ENCODE measurements at regions of chr6 and their contacts with region 1.

Region 1: DNA sequence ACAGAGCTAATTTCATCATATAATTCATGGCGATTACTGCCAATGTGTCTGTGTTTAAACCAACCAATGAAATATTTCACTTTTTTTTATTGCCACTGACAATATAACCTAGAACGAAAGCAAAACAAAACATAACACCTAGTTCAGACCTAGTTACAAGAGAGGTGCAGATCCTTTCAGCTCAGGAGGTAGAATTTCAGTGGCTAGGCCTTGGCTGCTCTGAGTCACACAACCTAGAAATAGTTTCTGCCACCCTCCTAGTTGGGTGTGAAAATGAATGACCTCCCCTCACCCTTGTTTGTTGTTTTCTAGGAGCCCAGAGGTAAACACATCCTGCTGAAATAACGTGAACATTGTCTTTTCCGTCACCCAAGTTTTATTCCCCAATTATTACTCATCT is 356.3 kb downstream of the HTR1B start:
- DNase-seq: no peak
- ATAC-seq: peak; percentile 99
- H3K4me3 ChIP-seq: no peak overlapping the region
- H3K27ac ChIP-seq: no peak overlapping the region
- H3K4me1 ChIP-seq: no peaks in the 10 kb centered on the region
- H3K27me3 ChIP-seq: no peaks in the 10 kb centered on the region
- CTCF ChIP-seq: no peak
- EP300 ChIP-seq: no peak
- POLR2A ChIP-seq: no peak
- RAD21 ChIP-seq: no peak

Region 2: GRCh38 chr6:76972474-76972873 is 134.5 kb before region 1 on chr6:
- CTCF ChIA-PET with region 1: no interaction called
- POLR2A ChIA-PET with region 1: no interaction called
- RAD21 ChIA-PET with region 1: no interaction called
- SMC1A ChIA-PET with region 1: no interaction called
- in situ Hi-C with region 1: no loop called
- intact Hi-C with region 1: no loop called
- DNase-seq: no peak
- ATAC-seq: no peak
- H3K4me3 ChIP-seq: no peak overlapping the region
- H3K27ac ChIP-seq: no peak overlapping the region
- H3K4me1 ChIP-seq: no peaks in the 10 kb centered on the region
- H3K27me3 ChIP-seq: no peaks in the 10 kb centered on the region
- CTCF ChIP-seq: no peak
- EP300 ChIP-seq: no peak
- POLR2A ChIP-seq: no peak
- RAD21 ChIP-seq: no peak

Region 3: GRCh38 chr6:77063494-77063893 is 43.5 kb before region 1 on chr6:
- CTCF ChIA-PET with region 1: no interaction called
- POLR2A ChIA-PET with region 1: no interaction called
- RAD21 ChIA-PET with region 1: no interaction called
- SMC1A ChIA-PET with region 1: no interaction called
- in situ Hi-C with region 1: no loop called
- intact Hi-C with region 1: no loop called
- DNase-seq: no peak
- ATAC-seq: 0 out of 3 replicates have a peak, but pooled peaks have one; percentile 14
- H3K4me3 ChIP-seq: no peak overlapping the region
- H3K27ac ChIP-seq: no peak overlapping the region
- H3K4me1 ChIP-seq: no peaks in the 10 kb centered on the region
- H3K27me3 ChIP-seq: no peaks in the 10 kb centered on the region
- CTCF ChIP-seq: no peak
- EP300 ChIP-seq: no peak
- POLR2A ChIP-seq: no peak
- RAD21 ChIP-seq: no peak

Region 4: GRCh38 chr6:77092971-77093370 is 14.0 kb before region 1 on chr6:
- CTCF ChIA-PET with region 1: interaction called, 3 read pairs
- POLR2A ChIA-PET with region 1: no interaction called
- RAD21 ChIA-PET with region 1: interaction called, 4 read pairs
- SMC1A ChIA-PET with region 1: interaction called, 25 read pairs
- in situ Hi-C with region 1: no loop called
- intact Hi-C with region 1: no loop called
- DNase-seq: no peak
- ATAC-seq: no peak
- H3K4me3 ChIP-seq: no peak overlapping the region
- H3K27ac ChIP-seq: no peak overlapping the region
- H3K4me1 ChIP-seq: no peaks in the 10 kb centered on the region
- H3K27me3 ChIP-seq: no peaks in the 10 kb centered on the region
- CTCF ChIP-seq: no peak
- EP300 ChIP-seq: no peak
- POLR2A ChIP-seq: no peak
- RAD21 ChIP-seq: no peak

Region 5: GRCh38 chr6:77136086-77136485 is 29.1 kb after region 1 on chr6:
- CTCF ChIA-PET with region 1: no interaction called
- POLR2A ChIA-PET with region 1: no interaction called
- RAD21 ChIA-PET with region 1: no interaction called
- SMC1A ChIA-PET with region 1: no interaction called
- in situ Hi-C with region 1: no loop called
- intact Hi-C with region 1: no loop called
- DNase-seq: no peak
- ATAC-seq: peak; percentile 17; the same call in 1 of the 3 replicates
- H3K4me3 ChIP-seq: no peak overlapping the region
- H3K27ac ChIP-seq: no peak overlapping the region
- H3K4me1 ChIP-seq: no peaks in the 10 kb centered on the region
- H3K27me3 ChIP-seq: no peaks in the 10 kb centered on the region
- CTCF ChIP-seq: no peak
- EP300 ChIP-seq: no peak
- POLR2A ChIP-seq: no peak
- RAD21 ChIP-seq: no peak

Region 6: DNA sequence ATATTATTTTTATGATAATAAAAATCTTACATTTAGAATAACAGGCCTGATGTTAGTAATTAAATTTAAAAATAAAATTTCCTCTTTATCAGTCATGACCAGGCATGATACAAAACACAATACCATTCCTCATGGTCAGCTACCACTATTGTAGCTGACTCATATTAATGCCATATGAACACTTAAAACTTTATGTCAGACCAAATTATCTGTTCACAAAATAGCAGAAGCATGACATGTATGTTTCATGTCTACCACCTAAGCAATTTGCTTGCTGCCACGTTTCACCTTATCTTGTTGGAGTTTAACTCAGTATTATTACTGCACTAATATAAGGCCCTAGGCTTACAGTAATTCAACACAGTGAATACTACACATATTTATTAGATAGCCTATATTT is 290.6 kb after region 1 on chr6:
- CTCF ChIA-PET with region 1: no interaction called
- POLR2A ChIA-PET with region 1: no interaction called
- RAD21 ChIA-PET with region 1: no interaction called
- SMC1A ChIA-PET with region 1: no interaction called
- in situ Hi-C with region 1: no loop called
- intact Hi-C with region 1: no loop called
- DNase-seq: no peak
- ATAC-seq: no peak
- H3K4me3 ChIP-seq: no peak overlapping the region
- H3K27ac ChIP-seq: no peak overlapping the region
- H3K4me1 ChIP-seq: no peaks in the 10 kb centered on the region
- H3K27me3 ChIP-seq: no peaks in the 10 kb centered on the region
- CTCF ChIP-seq: no peak
- EP300 ChIP-seq: no peak
- POLR2A ChIP-seq: no peak
- RAD21 ChIP-seq: no peak